OCI-LY7 (cell line): ENCODE measurements at regions of chr19 and their contacts with region 1.

Region 1: DNA sequence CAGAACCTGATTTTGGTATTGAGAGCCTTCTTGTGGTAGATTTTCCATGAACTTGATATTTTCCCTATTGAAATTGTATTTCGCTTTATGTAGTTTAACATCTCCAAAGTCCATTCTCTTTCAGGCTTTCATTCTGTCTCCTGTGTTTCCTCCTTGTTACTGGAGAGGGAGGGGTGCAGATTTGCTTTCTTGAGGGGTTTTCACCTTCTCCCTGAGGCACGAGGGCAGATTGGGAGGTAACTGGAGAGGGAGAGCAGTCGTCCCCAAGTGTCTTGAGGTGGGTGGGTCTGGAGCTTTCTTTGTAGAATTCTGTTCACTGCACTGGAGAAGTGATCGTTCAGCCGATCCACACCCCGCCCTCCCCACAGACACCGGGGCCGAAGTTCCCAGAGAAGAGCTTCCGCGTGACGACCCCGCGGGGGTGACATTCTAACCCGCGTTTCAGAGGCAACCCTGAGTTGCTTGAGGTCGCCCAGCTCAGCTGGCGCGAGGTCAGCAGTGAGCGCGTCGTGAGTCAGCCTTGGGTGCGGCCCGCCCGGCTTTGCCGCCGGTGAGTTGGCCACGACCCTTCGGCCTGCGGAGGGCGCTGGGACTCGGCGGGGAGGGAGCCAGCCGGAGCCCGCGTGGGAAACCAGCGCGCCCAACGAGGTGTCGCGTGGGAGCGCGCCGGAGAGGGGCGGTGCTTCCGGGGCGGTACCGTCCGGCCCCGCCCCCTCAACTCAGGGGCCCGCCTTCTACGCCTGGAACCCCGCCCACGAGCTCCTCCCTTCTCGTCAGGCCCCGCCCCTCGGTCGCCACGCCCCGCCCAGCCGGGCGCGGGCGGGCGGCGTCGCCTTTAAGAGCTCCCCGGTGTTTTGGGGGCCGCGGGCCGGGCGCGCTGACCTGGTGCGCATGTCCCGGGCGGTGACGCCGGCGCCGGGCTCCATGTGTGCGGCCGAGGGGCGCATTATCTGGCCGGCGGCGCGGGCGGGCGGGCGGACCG is at the start of gene GATAD2A:
- DNase-seq: peak; percentile 90
- H3K4me3 ChIP-seq: peak within 1 kb of the TSS; percentile 80
- H3K27ac ChIP-seq: peak within 1 kb of the TSS; percentile 61
- H3K4me1 ChIP-seq: peaks cover 46% of the 10 kb centered on the region
- CTCF ChIP-seq: peak; percentile 42
- total RNA-seq, gene GATAD2A: 62.8 and 73.4 TPM in 2 replicates

Region 2: GRCh38 chr19:19192078-19192882 is 212.9 kb before region 1 on chr19 and contains the starts of genes BORCS8 and RFXANK:
- CTCF ChIA-PET with region 1: no interaction called
- POLR2A ChIA-PET with region 1: no interaction called
- intact Hi-C with region 1: loop called (anchors 5 kb)
- DNase-seq: peak; percentile 100
- H3K4me3 ChIP-seq: peak within 1 kb of the TSS; percentile 93
- H3K27ac ChIP-seq: peak within 1 kb of the TSS; percentile 89
- H3K4me1 ChIP-seq: peaks cover 31% of the 10 kb centered on the region
- CTCF ChIP-seq: no peak
- total RNA-seq, gene BORCS8: 31.0 and 39.8 TPM in 2 replicates
- total RNA-seq, gene RFXANK: 103 and 105 TPM in 2 replicates

Region 3: DNA sequence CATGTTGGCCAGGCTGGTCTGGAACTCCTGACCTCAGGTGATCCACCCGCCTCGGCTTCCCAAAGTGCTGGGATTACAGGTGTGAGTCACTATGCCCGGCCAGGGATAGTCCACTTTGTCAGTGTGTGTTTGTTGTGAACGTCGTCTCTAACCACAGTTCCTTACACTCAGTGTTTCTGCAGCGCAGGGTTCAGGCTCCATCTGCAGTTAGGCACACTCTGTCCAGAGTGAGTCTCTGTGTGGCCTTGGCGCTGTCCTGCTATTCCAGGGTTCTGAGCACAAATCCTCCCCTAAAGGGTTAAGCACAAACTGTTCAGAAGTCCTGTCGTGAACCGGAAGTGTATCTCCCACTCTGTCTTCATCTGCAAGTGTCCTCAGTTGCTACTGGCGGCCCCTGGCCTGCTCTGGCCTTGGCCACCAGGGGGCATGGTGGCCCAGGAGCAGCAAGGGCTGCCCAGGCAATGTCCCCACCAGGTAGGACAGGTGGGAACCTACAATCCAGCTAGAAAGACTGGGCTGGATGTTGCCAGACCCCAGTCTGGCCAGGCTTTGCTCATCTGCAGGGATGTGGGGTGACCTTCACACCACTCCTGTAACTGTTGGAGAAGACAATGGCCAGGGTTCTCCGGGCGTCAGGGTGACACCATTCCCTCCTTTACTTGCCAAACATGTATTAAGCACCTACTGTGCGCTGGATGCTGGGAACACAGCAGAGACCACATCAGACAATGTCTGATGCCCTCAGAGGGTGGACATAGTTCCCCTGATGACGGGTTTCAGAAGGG is 38.4 kb before region 1 on chr19:
- CTCF ChIA-PET with region 1: interaction called, 3 read pairs
- POLR2A ChIA-PET with region 1: interaction called, 4 read pairs
- intact Hi-C with region 1: loop called (anchors 1 kb)
- DNase-seq: peak; percentile 92
- H3K4me3 ChIP-seq: peak overlapping the region; percentile 50
- H3K27ac ChIP-seq: peak overlapping the region; percentile 43
- H3K4me1 ChIP-seq: peaks cover 27% of the 10 kb centered on the region
- CTCF ChIP-seq: peak; percentile 97

Region 4: DNA sequence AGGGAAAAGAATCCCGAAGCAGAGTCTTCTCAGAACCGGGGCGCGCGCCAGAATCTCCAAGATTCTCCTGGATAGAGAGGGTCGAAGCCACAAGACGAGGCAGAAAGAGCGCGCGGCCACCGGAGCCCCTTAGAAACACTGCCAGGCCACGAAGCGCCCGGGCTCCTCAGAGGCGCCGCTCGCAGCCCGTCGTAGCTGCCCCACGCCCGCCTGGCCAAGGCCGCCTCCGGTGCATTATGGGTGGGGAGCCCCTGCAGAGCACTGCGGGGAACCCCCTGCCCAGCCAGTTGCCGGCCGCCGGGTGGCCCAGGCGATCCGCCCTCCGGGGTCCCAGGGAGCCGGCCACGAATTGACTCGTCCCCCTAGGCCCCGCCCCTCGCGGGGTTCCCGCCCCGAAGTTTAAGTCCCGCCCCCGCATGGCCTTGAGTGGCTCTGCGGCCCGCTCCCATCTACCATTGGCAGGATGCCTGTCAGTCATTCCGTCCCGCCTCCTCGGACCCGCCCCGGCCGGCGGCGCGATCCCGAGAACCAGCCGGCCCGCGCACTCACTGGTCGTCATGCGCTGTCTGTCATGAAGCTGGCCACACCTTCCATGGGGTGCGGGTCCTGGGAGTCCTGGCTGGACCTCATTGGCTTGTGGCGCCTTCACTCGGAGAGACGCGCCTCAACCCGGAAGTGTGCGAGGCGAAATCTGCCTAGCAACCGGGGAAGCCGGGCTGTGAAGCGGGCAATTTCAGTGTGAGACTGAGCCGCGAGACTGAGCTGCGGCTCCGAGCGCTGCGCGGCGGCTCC is 19.9 kb before region 1 on chr19:
- CTCF ChIA-PET with region 1: no interaction called
- POLR2A ChIA-PET with region 1: interaction called, 5 read pairs
- intact Hi-C with region 1: loop called (anchors 1 kb)
- DNase-seq: peak; percentile 100
- H3K4me3 ChIP-seq: peak overlapping the region; percentile 94
- H3K27ac ChIP-seq: no peak overlapping the region
- H3K4me1 ChIP-seq: peaks cover 57% of the 10 kb centered on the region
- CTCF ChIP-seq: no peak

Region 5: DNA sequence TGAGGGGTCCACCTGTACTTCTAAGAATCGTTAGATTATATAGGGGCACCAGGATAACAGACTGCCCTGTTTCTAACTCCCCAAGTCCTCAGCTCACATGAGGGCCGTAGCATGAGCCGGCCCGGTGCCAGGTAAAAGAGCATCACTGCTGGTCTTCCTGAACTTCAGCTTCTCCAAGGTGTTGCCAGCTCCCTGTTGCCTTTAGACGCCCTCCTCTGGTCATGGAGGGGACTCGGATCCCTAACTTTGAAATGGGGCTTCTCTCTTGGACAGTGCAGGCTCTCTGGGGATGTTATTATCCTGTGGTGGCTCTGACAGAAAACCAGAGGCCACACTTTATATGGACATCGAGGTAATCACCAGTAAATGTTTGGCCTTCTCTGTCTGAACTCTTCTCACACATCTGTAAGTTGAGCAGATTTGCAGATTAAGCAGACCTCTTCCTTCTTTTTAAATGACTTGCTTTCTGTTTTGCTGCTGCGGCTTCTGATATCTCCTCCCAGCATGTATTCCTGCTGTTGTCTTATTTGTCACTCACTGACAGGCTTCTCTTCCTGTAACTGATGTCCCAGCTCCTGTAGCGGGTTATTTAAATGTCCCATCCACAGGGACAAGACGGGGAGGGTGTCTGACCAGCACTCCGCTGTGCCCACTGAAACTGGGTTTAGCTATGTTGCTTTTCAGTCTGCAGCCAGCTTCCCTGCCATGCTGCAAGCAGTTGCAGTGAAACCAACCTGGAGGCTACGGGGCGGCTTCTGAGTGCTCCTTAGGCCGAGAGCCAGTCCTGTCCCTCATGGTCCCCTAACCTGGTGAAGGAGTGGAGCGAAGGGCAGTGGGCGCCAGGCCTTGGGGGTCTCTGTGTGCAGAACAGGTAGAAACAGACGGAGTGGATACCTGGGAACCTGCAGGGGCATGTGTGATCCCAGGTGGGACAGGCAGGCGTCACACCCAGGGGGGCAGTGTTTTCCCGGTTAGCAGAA is 71.0 kb after region 1 on chr19:
- CTCF ChIA-PET with region 1: no interaction called
- POLR2A ChIA-PET with region 1: no interaction called
- intact Hi-C with region 1: loop called (anchors 10 kb)
- DNase-seq: peak; percentile 26
- H3K4me3 ChIP-seq: no peak overlapping the region
- H3K27ac ChIP-seq: no peak overlapping the region
- H3K4me1 ChIP-seq: peaks cover 11% of the 10 kb centered on the region
- CTCF ChIP-seq: peak; percentile 58

Region 6: GRCh38 chr19:19677579-19677978 is 272.4 kb after region 1 on chr19:
- CTCF ChIA-PET with region 1: no interaction called
- POLR2A ChIA-PET with region 1: no interaction called
- intact Hi-C with region 1: no loop called
- DNase-seq: no peak
- H3K4me3 ChIP-seq: no peak overlapping the region
- H3K27ac ChIP-seq: no peak overlapping the region
- H3K4me1 ChIP-seq: no peaks in the 10 kb centered on the region
- CTCF ChIP-seq: no peak